Naive thymus-derived CD4-positive, alpha-beta T cell (primary cell): ENCODE measurements at regions of chr10 and their contacts with region 1.

Region 1: DNA sequence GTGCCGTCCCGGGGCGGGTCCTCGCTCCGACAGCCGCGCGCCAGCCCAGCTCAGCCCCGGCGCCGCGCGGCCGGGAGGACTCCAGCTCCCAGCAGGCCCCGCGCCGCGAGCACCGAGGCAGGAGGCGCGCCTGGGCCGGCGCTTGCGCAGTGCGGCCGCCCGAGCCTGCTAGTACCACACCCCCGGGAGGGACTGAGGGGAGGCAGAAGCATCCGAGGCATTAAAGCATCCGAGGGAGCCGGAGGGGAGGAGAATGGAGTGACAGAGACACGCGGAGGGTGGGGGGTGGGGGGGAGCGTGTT is at the start of gene GRK5:
- DNase-seq: peak; percentile 96 to 99 (median 98)
- ATAC-seq: peak; percentile 91
- H3K4me3 ChIP-seq: peak within 1 kb of the TSS; percentile 75
- H3K4me3 Mint-ChIP-seq: peak within 1 kb of the TSS; percentile 94 to 98 (median 97)
- H3K27ac ChIP-seq: peak within 1 kb of the TSS; percentile 89
- H3K27ac Mint-ChIP-seq: peak within 1 kb of the TSS; percentile 91 to 99 (median 96)
- H3K4me1 ChIP-seq: peaks cover 23 to 35% of the 10 kb centered on the region in 2 donors
- H3K4me1 Mint-ChIP-seq: peaks cover 41 to 48% (median 44%) of the 10 kb centered on the region in 7 donors
- H3K27me3 ChIP-seq: no peaks in the 10 kb centered on the region
- H3K27me3 Mint-ChIP-seq: no peaks in the 10 kb centered on the region
- total RNA-seq, gene GRK5: 20.3 to 45.2 (median 34.2) TPM

Region 2: GRCh38 chr10:119103903-119104652 is 103.2 kb before region 1 on chr10 and contains the start of gene DENND10:
- CTCF ChIA-PET with region 1: no interaction called
- POLR2A ChIA-PET with region 1: no interaction called
- intact Hi-C with region 1: loop called in 1 of 2 experiments (anchors 5 kb)
- DNase-seq: peak; percentile 18 to 80 (median 51)
- ATAC-seq: peak; percentile 93
- H3K4me3 ChIP-seq: peak within 1 kb of the TSS; percentile 45
- H3K4me3 Mint-ChIP-seq: peak within 1 kb of the TSS; percentile 65 to 94 (median 85)
- H3K27ac ChIP-seq: peak within 1 kb of the TSS; percentile 69
- H3K27ac Mint-ChIP-seq: peak within 1 kb of the TSS; percentile 62 to 96 (median 84)
- H3K4me1 ChIP-seq: peaks cover 6 to 20% of the 10 kb centered on the region in 2 donors
- H3K4me1 Mint-ChIP-seq: peaks cover 5 to 35% (median 14%) of the 10 kb centered on the region in 7 donors
- H3K27me3 ChIP-seq: no peaks in the 10 kb centered on the region
- H3K27me3 Mint-ChIP-seq: no peaks in the 10 kb centered on the region
- total RNA-seq, gene DENND10: 22.1 to 41.7 (median 28.8) TPM

Region 3: DNA sequence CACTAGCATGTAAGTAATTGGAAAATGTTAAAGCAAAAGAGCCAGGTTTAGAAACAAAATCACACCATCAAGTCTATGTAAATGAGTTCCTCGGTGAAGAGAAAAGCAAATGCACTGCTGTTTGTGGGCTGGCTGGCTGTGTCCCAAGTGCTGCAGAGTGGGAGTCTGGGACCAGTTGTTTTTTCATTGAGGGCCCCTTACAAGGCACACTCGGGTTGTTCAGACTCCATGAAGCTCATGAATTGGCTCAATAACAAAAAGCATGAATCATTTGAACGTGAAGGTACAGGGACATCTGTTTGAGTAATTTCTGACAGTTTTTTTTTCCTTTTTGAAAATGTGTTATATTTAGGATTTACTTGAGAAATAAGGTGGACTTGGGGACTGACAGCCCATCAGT is 28.0 kb after region 1 on chr10:
- CTCF ChIA-PET with region 1: interaction called, 3 read pairs
- POLR2A ChIA-PET with region 1: interaction called, 3 read pairs
- intact Hi-C with region 1: loop called in 1 of 2 experiments (anchors 2 kb)
- DNase-seq: no peak
- ATAC-seq: no peak
- H3K4me3 ChIP-seq: no peak overlapping the region
- H3K4me3 Mint-ChIP-seq: peak overlapping the region in 3 of 10 donors; percentile 8 to 27 (median 17)
- H3K27ac ChIP-seq: peak overlapping the region; percentile 9
- H3K27ac Mint-ChIP-seq: peak overlapping the region in 7 of 9 donors; percentile 51 to 79 (median 66)
- H3K4me1 ChIP-seq: peaks cover 0 to 16% of the 10 kb centered on the region in 2 donors
- H3K4me1 Mint-ChIP-seq: peaks cover 30 to 74% (median 69%) of the 10 kb centered on the region in 7 donors
- H3K27me3 ChIP-seq: no peaks in the 10 kb centered on the region
- H3K27me3 Mint-ChIP-seq: no peaks in the 10 kb centered on the region

Region 4: DNA sequence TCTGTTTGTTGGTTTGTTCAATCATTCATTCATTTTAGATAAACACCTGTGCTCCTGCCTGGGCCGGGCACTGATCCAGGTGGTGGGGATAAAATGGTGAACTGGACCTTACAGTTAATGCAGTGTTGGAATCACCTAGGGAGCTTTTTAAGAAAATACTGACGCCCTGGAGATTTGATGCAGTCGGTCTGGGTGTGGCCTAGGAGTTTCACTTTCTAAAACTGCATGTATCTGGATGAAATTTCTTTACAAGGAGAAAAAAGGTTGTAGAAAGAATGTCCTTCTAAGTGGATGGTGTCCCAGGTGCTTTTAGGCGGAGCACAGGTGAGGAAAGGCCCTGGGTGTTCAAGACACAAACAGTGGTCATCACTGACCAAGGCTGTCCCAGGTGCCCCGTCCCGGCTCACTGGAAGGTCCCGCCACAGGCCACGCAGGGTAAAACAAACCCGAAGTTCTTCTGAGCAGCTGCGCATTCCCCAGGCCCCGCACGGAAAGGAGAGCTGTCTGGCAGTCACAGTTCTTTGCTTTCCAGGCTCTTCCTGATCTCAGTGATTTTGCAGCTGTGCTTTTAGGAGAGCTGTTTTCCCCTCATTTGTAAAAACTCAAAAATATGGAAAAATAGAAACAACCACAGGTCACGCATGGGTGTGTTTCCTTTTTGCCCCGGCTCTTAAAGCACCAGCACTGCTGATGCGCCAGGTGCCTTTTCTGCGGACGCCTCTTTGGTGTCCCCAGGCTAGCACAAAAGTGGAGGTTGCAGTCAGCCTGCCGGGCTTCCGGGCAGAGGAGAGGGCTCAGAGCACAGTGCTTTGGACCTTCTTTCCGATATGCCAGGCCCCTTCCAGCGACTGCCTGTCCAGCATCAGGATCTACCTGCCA is 161.9 kb after region 1 on chr10:
- CTCF ChIA-PET with region 1: no interaction called
- POLR2A ChIA-PET with region 1: no interaction called
- intact Hi-C with region 1: no loop called
- DNase-seq: no peak
- ATAC-seq: no peak
- H3K4me3 ChIP-seq: no peak overlapping the region
- H3K4me3 Mint-ChIP-seq: no peak overlapping the region
- H3K27ac ChIP-seq: no peak overlapping the region
- H3K27ac Mint-ChIP-seq: peak overlapping the region in 2 of 9 donors; percentile 28 to 46
- H3K4me1 ChIP-seq: peaks cover 0 to 2% of the 10 kb centered on the region in 2 donors
- H3K4me1 Mint-ChIP-seq: peaks cover 16 to 46% (median 28%) of the 10 kb centered on the region in 7 donors
- H3K27me3 ChIP-seq: no peaks in the 10 kb centered on the region
- H3K27me3 Mint-ChIP-seq: no peaks in the 10 kb centered on the region

Region 5: GRCh38 chr10:119416855-119417254 is 209.5 kb after region 1 on chr10:
- CTCF ChIA-PET with region 1: interaction called, 18 read pairs
- POLR2A ChIA-PET with region 1: interaction called, 3 read pairs
- intact Hi-C with region 1: loop called (anchors 1 kb)
- DNase-seq: peak; percentile 44 to 69 (median 62)
- ATAC-seq: peak; percentile 89
- H3K4me3 ChIP-seq: no peak overlapping the region
- H3K4me3 Mint-ChIP-seq: no peak overlapping the region
- H3K27ac ChIP-seq: no peak overlapping the region
- H3K27ac Mint-ChIP-seq: no peak overlapping the region
- H3K4me1 ChIP-seq: no peaks in the 10 kb centered on the region
- H3K4me1 Mint-ChIP-seq: peaks cover 0 to 5% (median 0%) of the 10 kb centered on the region in 7 donors
- H3K27me3 ChIP-seq: no peaks in the 10 kb centered on the region
- H3K27me3 Mint-ChIP-seq: no peaks in the 10 kb centered on the region

Region 6: DNA sequence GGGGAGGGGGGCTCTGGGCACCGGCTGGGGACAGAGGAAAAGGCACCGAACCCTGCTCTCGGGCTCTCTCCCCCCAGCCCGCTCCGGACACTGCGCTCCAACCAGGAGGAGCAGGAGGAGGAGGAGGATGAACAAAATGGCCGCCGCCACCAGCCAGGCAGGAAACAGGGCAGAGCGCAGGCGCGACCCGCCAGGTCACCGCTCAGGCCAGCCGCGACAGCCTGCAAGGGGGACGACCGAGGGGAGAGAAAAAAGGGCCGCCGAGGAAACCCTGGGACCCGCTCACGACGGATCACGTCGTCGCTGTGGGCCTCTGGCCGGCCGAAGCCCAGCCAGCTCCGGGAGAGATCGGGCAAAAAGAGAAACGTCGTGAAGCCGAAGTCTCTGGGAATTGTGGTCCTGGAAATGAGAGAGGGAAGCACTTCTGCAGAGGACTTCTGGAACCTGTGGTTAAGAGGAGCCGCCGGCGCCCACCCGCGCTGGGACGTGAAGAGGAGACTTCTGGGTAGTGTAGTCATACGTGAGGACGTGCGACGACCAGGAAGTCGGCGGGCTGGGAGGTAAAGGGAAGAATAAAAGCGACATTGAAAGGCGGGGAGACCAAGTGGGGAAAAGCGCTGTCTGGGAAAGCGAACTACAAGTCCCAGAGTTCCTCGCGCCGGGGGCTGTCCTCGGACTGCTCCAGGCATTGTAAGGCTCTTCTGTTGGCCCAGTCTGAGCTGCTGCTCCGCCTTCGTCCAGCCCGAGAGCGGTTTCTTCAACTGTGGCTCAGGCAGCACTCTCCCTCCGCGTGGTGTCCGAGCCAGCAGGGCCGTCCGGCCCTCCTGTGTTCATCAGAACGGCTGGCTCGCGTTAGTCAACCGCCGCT is 389.5 kb after region 1 on chr10 and contains the start of gene TIAL1:
- CTCF ChIA-PET with region 1: interaction called, 3 read pairs
- POLR2A ChIA-PET with region 1: no interaction called
- intact Hi-C with region 1: loop called (anchors 1 kb)
- DNase-seq: peak; percentile 73 to 95 (median 89)
- ATAC-seq: peak; percentile 88
- H3K4me3 ChIP-seq: peak within 1 kb of the TSS; percentile 96
- H3K4me3 Mint-ChIP-seq: peak within 1 kb of the TSS; percentile 85 to 99 (median 96)
- H3K27ac ChIP-seq: peak within 1 kb of the TSS; percentile 98
- H3K27ac Mint-ChIP-seq: peak within 1 kb of the TSS; percentile 90 to 99 (median 96)
- H3K4me1 ChIP-seq: peaks cover 28 to 38% of the 10 kb centered on the region in 2 donors
- H3K4me1 Mint-ChIP-seq: peaks cover 35 to 56% (median 48%) of the 10 kb centered on the region in 7 donors
- H3K27me3 ChIP-seq: no peaks in the 10 kb centered on the region
- H3K27me3 Mint-ChIP-seq: no peaks in the 10 kb centered on the region
- total RNA-seq, gene TIAL1: 166 to 228 (median 176) TPM

Region 7: DNA sequence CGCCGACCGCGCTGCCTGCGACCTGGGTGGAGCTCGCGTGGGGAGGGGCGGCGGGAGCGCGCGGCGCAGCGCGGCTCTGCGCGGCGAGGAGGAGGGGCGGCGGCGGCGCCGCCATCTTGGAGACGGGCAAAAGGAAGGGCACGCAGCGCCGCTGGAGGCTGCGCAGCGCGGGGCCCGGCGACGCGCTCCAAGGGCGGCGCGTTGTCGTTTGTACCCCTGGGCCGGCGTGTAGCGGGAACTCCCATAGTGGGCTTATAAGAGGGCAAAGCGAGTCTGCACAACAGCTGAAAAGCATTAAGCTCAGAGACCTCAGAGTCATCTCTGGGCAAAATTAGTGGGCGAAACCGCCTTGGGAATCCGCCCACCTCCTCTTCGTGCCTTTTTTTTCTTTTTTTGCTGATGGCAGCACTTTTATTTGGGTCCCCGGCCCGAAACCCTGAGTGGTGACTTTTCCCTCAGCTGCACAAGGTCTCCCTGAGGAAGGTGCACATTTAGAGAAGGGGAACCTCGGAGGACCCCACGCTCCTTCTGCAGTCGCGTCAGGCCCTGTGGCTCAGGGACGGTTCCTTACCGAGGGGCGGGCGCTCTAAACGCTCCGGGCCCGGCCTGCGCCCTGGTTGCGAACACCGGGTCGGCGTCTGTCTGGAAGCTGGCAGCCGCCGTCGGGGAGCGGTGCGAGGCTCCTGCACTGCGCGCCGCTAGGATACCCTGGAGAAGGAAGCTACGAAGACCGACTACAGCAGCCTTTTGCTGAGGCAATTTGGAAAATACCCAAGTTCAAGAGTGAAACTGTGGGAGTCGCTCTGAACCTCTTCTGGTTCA is 665.8 kb after region 1 on chr10:
- CTCF ChIA-PET with region 1: no interaction called
- POLR2A ChIA-PET with region 1: interaction called, 3 read pairs
- intact Hi-C with region 1: loop called in 1 of 2 experiments (anchors 1 kb)
- DNase-seq: peak; percentile 81 to 88 (median 86)
- ATAC-seq: peak; percentile 96
- H3K4me3 ChIP-seq: peak overlapping the region; percentile 97
- H3K4me3 Mint-ChIP-seq: peak overlapping the region; percentile 82 to 92 (median 89)
- H3K27ac ChIP-seq: peak overlapping the region; percentile 84
- H3K27ac Mint-ChIP-seq: peak overlapping the region; percentile 79 to 95 (median 92)
- H3K4me1 ChIP-seq: peaks cover 21 to 28% of the 10 kb centered on the region in 2 donors
- H3K4me1 Mint-ChIP-seq: peaks cover 23 to 46% (median 41%) of the 10 kb centered on the region in 7 donors
- H3K27me3 ChIP-seq: no peaks in the 10 kb centered on the region
- H3K27me3 Mint-ChIP-seq: peaks cover 0 to 6% (median 0%) of the 10 kb centered on the region in 5 donors